Breast epithelium (tissue), 4 donors: ENCODE measurements at regions of chr3 and their contacts with region 1.

Region 1: DNA sequence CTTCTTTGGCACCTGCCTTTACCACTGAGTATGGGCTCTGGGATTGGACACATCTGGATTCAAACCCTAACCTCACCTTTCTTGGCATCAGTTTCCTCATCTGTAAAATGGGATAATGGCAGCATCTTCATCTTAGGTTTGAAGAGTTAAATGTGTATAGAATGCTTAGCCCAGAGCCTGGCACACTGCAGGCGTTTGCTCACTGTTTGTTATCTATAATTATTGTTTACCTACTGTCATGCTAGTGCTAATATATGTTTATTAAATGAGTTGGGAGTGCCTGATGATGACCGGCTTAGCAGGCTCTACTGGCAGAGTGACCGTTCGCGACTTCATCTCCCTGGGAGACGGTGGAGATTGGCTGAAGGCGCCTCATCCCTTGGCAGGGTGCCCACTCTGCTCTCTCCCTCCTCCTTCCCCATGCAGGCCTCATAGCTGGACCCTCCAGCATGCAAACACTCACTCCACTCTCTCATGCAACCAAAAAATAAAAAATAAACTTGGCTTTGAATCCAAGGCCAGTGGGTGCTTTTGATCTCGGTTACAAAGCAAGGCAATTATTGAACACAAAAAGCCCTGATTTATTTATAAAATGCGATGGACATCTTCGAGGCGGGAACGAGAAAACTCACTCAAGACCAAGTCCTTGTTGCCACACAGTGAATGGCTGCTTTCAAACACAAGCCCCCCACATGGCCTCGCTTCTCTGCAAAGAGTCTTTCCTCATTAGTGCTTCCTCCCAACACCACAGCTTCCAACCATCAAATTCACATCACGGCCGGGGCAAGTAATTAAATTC is 135.5 kb upstream of the RAD18 start:
- DNase-seq: peak in 1 of 2 donors; percentile 77
- H3K4me3 ChIP-seq: no peak overlapping the region
- H3K27ac ChIP-seq: no peak overlapping the region
- H3K4me1 ChIP-seq: no peaks in the 10 kb centered on the region
- H3K27me3 ChIP-seq: no peaks in the 10 kb centered on the region
- CTCF ChIP-seq: no peak
- POLR2A ChIP-seq: no peak

Region 2: GRCh38 chr3:10594921-10595320 is 1496.2 kb after region 1 on chr3:
- intact Hi-C with region 1: loop called (anchors 5 kb)
- DNase-seq: no peak
- H3K4me3 ChIP-seq: no peak overlapping the region
- H3K27ac ChIP-seq: no peak overlapping the region
- H3K4me1 ChIP-seq: no peaks in the 10 kb centered on the region
- H3K27me3 ChIP-seq: peaks cover 0 to 6% of the 10 kb centered on the region in 2 donors
- CTCF ChIP-seq: no peak
- POLR2A ChIP-seq: no peak